ENCODE measurements at regions of chr10 and their contacts with region 1.

Region 1: GRCh38 chr10:112434988-112435619 is 11.6 kb downstream of the ZDHHC6 start:
- DNase-seq: no peak
- H3K4me3 ChIP-seq: no peak overlapping the region
- H3K27ac ChIP-seq: no peak overlapping the region
- H3K4me1 ChIP-seq: no peaks in the 10 kb centered on the region
- H3K27me3 ChIP-seq: no peaks in the 10 kb centered on the region
- CTCF ChIP-seq: peak; percentile 56

Region 2: DNA sequence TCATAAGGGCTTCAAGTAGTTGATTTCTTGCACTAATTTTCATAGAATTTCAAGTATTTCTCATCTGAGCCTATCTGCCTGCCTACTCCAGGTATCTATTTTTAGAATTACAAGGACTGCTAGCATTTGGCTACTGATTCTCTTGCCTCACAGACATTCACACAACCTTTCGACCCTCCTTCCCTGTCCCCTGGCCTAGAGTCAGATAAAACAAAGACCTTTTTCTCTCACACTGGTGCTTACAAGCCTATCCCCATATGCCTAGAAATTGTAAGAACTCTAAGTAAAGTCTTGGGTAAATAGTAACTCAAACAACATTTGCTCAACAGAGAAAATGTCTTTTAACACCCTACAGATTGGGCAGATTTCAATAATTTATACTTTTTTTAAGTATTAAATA is 257.9 kb before region 1 on chr10:
- intact Hi-C with region 1: loop called (anchors 10 kb)
- DNase-seq: no peak
- H3K4me3 ChIP-seq: peak overlapping the region; percentile 8
- H3K27ac ChIP-seq: peak overlapping the region; percentile 74
- H3K4me1 ChIP-seq: peaks cover 39% of the 10 kb centered on the region
- H3K27me3 ChIP-seq: no peaks in the 10 kb centered on the region
- CTCF ChIP-seq: no peak

Region 3: GRCh38 chr10:112278871-112279270 is 156.2 kb before region 1 on chr10:
- intact Hi-C with region 1: no loop called
- DNase-seq: no peak
- H3K4me3 ChIP-seq: no peak overlapping the region
- H3K27ac ChIP-seq: no peak overlapping the region
- H3K4me1 ChIP-seq: no peaks in the 10 kb centered on the region
- H3K27me3 ChIP-seq: no peaks in the 10 kb centered on the region
- CTCF ChIP-seq: no peak

Region 4: DNA sequence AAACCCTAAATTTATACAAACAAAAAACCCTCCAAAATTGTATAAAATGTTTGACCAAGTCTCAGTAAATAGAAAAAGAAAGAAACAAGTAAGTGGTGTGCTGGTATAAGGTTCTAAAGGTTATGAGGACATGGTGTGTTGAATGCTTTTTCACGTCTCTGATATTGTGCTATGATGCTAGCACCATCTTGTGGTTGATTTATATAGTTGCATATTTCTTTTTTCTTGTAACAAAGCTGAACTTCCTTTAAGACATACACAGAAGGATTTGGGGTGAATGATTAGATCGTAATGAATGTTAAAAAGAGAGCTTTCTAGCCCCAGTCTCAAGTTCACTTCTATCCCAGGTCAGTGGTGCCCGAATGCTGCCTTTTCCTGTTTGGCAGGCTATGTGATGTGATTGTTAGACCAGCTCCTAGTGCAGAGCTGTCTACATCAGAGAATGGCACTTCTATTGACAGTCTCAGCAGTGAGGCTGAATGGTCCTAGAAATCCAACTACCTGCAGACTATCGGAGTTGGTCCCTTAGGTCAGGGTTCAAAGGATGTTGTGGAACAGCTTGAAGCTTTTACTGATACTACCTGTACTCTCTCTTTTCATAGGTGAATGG is 36.9 kb after region 1 on chr10:
- intact Hi-C with region 1: no loop called
- DNase-seq: no peak
- H3K4me3 ChIP-seq: no peak overlapping the region
- H3K27ac ChIP-seq: no peak overlapping the region
- H3K4me1 ChIP-seq: peaks cover 13% of the 10 kb centered on the region
- H3K27me3 ChIP-seq: no peaks in the 10 kb centered on the region
- CTCF ChIP-seq: peak; percentile 79